ENCODE measurements at regions of chr19 and their contacts with region 1.

Region 1: GRCh38 chr19:41872775-41873647 is 4.1 kb upstream of the CD79A start:
- DNase-seq: peak in 2 of 4 experiments; percentile 71 to 85
- ATAC-seq: peak; percentile 82
- H3K4me3 ChIP-seq: no peak overlapping the region
- H3K27ac ChIP-seq: no peak overlapping the region; the same call in 2 of the 3 replicates
- H3K4me1 ChIP-seq: peaks cover 19 to 38% of the 10 kb centered on the region in 2 experiments
- H3K27me3 ChIP-seq: no peaks in the 10 kb centered on the region
- CTCF ChIP-seq: peak; percentile 89 to 93 (median 91)
- EP300 ChIP-seq: no peak
- POLR2A ChIP-seq: no peak; the same call in 1 of the 2 replicates
- RAD21 ChIP-seq: peak; percentile 79 to 88

Region 2: GRCh38 chr19:41859618-41860418 is 13.2 kb before region 1 on chr19 and contains the start of gene RPS19:
- CTCF ChIA-PET with region 1: no interaction called
- POLR2A ChIA-PET with region 1: interaction called, 54 read pairs
- in situ Hi-C with region 1: no loop called
- intact Hi-C with region 1: no loop called
- DNase-seq: peak; percentile 93 to 99 (median 95)
- ATAC-seq: peak; percentile 93
- H3K4me3 ChIP-seq: peak within 1 kb of the TSS; percentile 93
- H3K27ac ChIP-seq: peak within 1 kb of the TSS; percentile 99
- H3K4me1 ChIP-seq: peaks cover 25 to 30% of the 10 kb centered on the region in 2 experiments
- H3K27me3 ChIP-seq: no peaks in the 10 kb centered on the region
- CTCF ChIP-seq: peak; percentile 71 to 82 (median 76)
- EP300 ChIP-seq: peak; percentile 40
- POLR2A ChIP-seq: peak; percentile 97
- RAD21 ChIP-seq: 0 out of 4 replicates have a peak, but pooled peaks of 1 of the 2 experiments have one; percentile 1
- polyA plus RNA-seq, gene RPS19: 3,130 to 3,408 TPM

Region 3: DNA sequence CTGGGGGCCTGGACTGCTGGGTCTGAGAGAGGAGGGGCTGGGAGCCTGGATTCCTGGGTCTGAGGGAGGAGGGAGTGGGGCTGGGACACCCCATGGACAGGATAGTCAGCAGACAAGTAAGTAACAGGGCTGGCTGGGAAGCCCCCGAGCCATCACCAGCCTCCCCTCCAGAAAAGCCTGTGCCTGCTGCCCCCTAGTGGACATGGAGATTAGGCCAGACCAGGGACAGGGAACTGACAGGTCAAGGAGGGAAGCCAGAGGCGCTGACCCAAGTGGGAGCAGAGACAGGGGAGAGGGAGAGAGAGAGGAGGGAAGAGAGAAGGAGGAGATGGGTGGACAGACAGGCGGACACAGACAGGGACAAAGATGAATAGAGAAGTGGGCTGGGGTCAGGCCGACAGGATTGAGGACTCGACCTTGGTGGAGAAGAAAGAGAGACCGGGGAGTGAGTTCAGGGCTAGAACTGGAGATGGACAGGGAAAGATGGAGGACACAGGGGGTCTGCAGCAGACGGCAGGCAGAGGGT is 61.9 kb after region 1 on chr19:
- CTCF ChIA-PET with region 1: no interaction called
- POLR2A ChIA-PET with region 1: interaction called, 3 read pairs
- in situ Hi-C with region 1: no loop called
- intact Hi-C with region 1: loop called (anchors 1 kb)
- DNase-seq: peak; percentile 74 to 87 (median 77)
- ATAC-seq: peak; percentile 84
- H3K4me3 ChIP-seq: no peak overlapping the region
- H3K27ac ChIP-seq: no peak overlapping the region
- H3K4me1 ChIP-seq: peaks cover 25 to 70% of the 10 kb centered on the region in 2 experiments
- H3K27me3 ChIP-seq: no peaks in the 10 kb centered on the region
- CTCF ChIP-seq: peak; percentile 84 to 93 (median 85)
- EP300 ChIP-seq: no peak
- POLR2A ChIP-seq: no peak
- RAD21 ChIP-seq: peak; percentile 22 to 74

Region 4: DNA sequence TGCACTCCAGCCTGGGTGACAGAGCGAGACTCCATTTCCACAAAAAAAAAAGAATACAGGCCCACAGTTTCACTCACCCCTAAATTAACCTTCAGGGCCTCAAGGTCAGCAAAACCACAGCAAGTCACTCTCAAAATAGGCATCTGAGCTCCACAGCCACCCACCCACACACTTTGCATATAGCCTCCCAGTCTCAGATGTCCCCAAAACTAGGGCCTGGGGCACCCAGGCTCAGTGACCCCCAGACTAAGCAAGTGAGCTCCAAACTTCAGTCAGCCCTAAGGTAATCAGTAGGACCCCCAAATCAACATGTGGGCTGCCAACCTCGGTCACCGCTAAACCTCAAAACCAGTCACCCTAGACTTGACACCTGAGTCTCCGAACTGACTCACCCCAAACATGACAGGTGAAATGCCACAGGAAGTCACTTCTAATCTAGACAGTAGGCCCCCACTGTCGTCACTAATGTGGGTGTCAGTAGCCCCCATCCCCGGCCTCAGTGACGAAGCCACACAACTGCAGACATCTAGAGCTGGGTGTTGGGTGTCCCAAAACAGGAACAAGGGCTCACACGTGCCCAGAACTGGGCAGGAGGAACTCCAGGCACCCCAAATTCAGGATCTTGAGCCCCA is 72.2 kb after region 1 on chr19:
- CTCF ChIA-PET with region 1: interaction called, 35 read pairs
- POLR2A ChIA-PET with region 1: interaction called, 4 read pairs
- in situ Hi-C with region 1: loop called (anchors 5 kb)
- intact Hi-C with region 1: no loop called
- DNase-seq: no peak
- ATAC-seq: no peak
- H3K4me3 ChIP-seq: no peak overlapping the region
- H3K27ac ChIP-seq: no peak overlapping the region
- H3K4me1 ChIP-seq: peaks cover 0 to 14% of the 10 kb centered on the region in 2 experiments; a peak in 2 of 5 replicates
- H3K27me3 ChIP-seq: no peaks in the 10 kb centered on the region
- CTCF ChIP-seq: no peak
- EP300 ChIP-seq: no peak
- POLR2A ChIP-seq: no peak
- RAD21 ChIP-seq: no peak

Region 5: GRCh38 chr19:41951686-41952172 is 78.7 kb after region 1 on chr19:
- CTCF ChIA-PET with region 1: interaction called, 35 read pairs
- POLR2A ChIA-PET with region 1: interaction called, 3 read pairs
- in situ Hi-C with region 1: loop called (anchors 5 kb)
- intact Hi-C with region 1: loop called (anchors 1 kb)
- DNase-seq: peak; percentile 86 to 87 (median 86)
- ATAC-seq: peak; percentile 93
- H3K4me3 ChIP-seq: no peak overlapping the region
- H3K27ac ChIP-seq: no peak overlapping the region
- H3K4me1 ChIP-seq: peaks cover 10 to 13% of the 10 kb centered on the region in 2 experiments; a peak in 4 of 5 replicates
- H3K27me3 ChIP-seq: no peaks in the 10 kb centered on the region
- CTCF ChIP-seq: peak; percentile 93 to 95 (median 94)
- EP300 ChIP-seq: no peak
- POLR2A ChIP-seq: no peak
- RAD21 ChIP-seq: peak; percentile 69 to 91

Region 6: DNA sequence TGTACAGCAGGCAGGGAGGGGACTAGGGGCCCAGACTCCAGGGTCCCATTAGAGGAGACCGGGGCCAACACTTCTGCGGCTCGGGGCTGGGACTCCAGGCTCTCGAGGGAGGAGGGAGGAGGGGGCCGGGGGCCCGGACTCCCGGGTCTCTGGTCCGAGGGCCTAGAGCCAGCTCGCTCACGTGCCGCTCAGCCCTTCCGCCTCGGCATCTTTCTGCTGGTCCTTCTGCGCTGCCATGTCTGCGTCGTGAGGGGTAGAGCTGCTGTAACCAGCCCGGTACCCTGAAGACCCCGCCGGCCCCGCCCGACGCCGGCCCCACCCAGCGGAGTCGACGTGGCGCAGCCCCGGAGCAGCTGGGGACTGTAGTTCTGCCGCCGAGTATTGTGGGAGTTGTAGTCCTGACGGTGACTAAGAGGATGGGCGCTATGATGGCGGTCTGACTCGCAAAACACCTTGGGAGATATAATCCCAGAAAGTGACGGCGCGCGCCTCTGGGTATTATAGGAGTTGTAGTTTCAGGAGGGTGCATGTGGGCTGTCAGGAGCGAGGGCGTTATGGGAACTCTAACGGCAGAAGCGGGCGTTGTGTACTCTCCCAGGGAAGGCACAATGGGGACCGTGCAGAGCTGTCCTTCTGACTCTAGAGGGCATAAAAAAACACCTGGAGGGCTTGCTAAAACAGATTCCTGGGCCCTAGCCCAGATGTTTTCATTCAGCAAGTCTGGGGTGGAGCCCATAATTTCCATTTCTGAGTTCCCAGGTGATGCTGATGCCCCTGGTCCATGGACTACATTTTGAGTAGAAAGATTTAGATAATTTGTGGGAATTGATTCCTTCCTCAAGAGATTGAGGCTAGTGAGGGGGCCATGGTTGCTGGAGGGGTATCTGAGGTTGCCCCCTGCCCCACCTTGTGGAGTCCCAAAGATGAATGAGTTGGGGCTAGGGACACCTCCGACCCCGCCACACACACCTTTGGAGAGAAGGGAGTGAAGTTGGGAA is 86.3 kb after region 1 on chr19 and contains the start of gene RABAC1:
- CTCF ChIA-PET with region 1: interaction called, 18 read pairs
- POLR2A ChIA-PET with region 1: interaction called, 14 read pairs
- in situ Hi-C with region 1: no loop called
- intact Hi-C with region 1: loop called (anchors 2 kb)
- DNase-seq: peak; percentile 92 to 93 (median 92)
- ATAC-seq: peak; percentile 93
- H3K4me3 ChIP-seq: peak within 1 kb of the TSS; percentile 61
- H3K27ac ChIP-seq: peak within 1 kb of the TSS; percentile 60
- H3K4me1 ChIP-seq: peaks cover 15 to 40% of the 10 kb centered on the region in 2 experiments; a peak in 4 of 5 replicates
- H3K27me3 ChIP-seq: no peaks in the 10 kb centered on the region
- CTCF ChIP-seq: peak; percentile 51 to 60 (median 59)
- EP300 ChIP-seq: peak; percentile 15; the same call in 1 of the 2 replicates
- POLR2A ChIP-seq: no peak; the same call in 1 of the 2 replicates
- RAD21 ChIP-seq: peak; percentile 30 to 46
- polyA plus RNA-seq, gene RABAC1: 5.2 to 9.3 TPM

Region 7: DNA sequence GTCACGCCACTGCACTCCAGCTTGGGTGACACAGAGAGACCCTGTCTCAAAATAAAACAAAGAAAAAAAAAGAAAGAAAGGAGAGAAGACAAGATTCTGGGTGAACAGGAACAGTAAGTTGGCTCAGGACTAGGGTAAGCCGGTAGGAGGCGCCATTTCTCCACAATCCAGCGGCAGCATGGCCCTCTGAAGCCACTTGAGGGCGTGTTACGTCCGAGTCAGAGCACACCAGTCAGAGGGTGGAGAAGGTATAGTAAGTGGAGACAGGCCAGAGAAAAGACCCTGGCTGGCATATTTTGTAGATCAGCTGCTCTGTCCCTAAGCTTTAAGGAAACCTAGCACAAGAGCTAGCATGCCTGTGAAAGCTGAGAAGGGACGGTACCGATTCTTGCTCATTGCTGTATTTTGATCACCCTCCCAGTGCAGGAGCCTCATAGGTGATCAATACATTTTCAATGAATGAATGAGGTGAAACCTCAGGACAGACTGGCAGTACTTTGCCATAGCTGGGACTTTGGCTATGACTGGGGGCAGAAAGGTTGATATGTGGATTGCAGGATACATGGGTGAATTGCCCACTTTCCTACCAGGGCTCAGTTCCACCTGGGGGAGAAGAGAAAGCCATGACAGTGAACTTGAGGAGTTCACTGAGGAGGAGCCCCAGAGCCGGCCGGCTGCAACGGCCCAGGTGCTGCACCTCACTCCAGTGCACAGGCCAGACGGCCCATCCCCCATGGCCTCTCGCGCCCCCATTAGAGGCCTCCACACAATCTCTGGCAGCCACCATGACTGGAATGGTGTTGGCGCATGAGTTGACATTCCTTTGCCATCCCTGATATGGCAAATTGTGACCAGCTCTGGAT is 235.7 kb after region 1 on chr19:
- CTCF ChIA-PET with region 1: no interaction called
- POLR2A ChIA-PET with region 1: no interaction called
- in situ Hi-C with region 1: no loop called
- intact Hi-C with region 1: no loop called
- DNase-seq: peak; percentile 85 to 91 (median 87)
- ATAC-seq: peak; percentile 98
- H3K4me3 ChIP-seq: no peak overlapping the region
- H3K27ac ChIP-seq: no peak overlapping the region
- H3K4me1 ChIP-seq: peaks cover 0 to 5% of the 10 kb centered on the region in 2 experiments; a peak in 2 of 5 replicates
- H3K27me3 ChIP-seq: peaks cover under 1 to 19% of the 10 kb centered on the region in 2 experiments; a peak in 2 of 5 replicates
- CTCF ChIP-seq: peak; percentile 100
- EP300 ChIP-seq: no peak
- POLR2A ChIP-seq: no peak
- RAD21 ChIP-seq: peak; percentile 91 to 100

Region 8: DNA sequence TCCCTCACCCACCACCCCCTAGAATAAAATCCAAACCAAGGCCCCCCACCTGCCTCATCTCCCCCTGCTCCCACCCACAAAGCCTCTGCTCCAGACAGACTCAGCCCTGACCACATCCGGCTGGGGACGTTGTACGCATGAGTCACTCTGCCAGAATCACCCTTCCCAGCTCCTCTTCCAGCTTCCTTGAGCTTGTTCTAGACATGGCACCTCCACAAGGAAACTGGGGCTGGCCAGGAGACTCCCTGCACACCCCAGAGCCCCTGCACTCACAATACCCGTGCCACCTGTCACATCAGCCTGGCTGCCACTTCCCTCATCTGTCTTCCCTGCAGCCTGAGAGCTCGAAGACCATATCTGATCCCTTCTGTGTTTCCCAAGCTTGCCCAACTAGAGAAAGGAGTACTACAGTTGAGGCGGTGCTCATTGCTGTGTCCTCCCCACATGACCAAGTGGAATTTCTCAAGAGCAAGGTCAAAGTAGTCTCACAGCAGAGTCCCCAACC is 334.8 kb after region 1 on chr19:
- CTCF ChIA-PET with region 1: no interaction called
- POLR2A ChIA-PET with region 1: no interaction called
- in situ Hi-C with region 1: no loop called
- intact Hi-C with region 1: no loop called
- DNase-seq: peak; percentile 43 to 75 (median 58)
- ATAC-seq: peak; percentile 85
- H3K4me3 ChIP-seq: no peak overlapping the region
- H3K27ac ChIP-seq: peak overlapping the region; percentile 80
- H3K4me1 ChIP-seq: peaks cover 24 to 27% of the 10 kb centered on the region in 2 experiments
- H3K27me3 ChIP-seq: no peaks in the 10 kb centered on the region
- CTCF ChIP-seq: no peak
- EP300 ChIP-seq: peak; percentile 30; the same call in 1 of the 2 replicates
- POLR2A ChIP-seq: no peak
- RAD21 ChIP-seq: no peak

Measured in K562 (cell line).